ENCODE measurements at regions of chr9 and their contacts with region 1.

Region 1: GRCh38 chr9:35732122-35732799 is at the starts of genes CREB3 and TLN1:
- DNase-seq: peak; percentile 92 to 98 (median 96)
- ATAC-seq: peak; percentile 91
- H3K4me3 ChIP-seq: peak within 1 kb of the TSS; percentile 91 to 99
- H3K4me3 Mint-ChIP-seq: peak within 1 kb of the TSS; percentile 93
- H3K27ac ChIP-seq: peak within 1 kb of the TSS; percentile 84 to 96
- H3K27ac Mint-ChIP-seq: peak within 1 kb of the TSS; percentile 88
- H3K4me1 ChIP-seq: peaks cover 62% of the 10 kb centered on the region
- H3K4me1 Mint-ChIP-seq: peaks cover 24% of the 10 kb centered on the region
- H3K27me3 ChIP-seq: no peaks in the 10 kb centered on the region
- H3K27me3 Mint-ChIP-seq: no peaks in the 10 kb centered on the region
- CTCF ChIP-seq: no peak
- total RNA-seq, gene CREB3: 13.1 to 14.2 TPM
- total RNA-seq, gene TLN1: 128 to 129 TPM

Region 2: DNA sequence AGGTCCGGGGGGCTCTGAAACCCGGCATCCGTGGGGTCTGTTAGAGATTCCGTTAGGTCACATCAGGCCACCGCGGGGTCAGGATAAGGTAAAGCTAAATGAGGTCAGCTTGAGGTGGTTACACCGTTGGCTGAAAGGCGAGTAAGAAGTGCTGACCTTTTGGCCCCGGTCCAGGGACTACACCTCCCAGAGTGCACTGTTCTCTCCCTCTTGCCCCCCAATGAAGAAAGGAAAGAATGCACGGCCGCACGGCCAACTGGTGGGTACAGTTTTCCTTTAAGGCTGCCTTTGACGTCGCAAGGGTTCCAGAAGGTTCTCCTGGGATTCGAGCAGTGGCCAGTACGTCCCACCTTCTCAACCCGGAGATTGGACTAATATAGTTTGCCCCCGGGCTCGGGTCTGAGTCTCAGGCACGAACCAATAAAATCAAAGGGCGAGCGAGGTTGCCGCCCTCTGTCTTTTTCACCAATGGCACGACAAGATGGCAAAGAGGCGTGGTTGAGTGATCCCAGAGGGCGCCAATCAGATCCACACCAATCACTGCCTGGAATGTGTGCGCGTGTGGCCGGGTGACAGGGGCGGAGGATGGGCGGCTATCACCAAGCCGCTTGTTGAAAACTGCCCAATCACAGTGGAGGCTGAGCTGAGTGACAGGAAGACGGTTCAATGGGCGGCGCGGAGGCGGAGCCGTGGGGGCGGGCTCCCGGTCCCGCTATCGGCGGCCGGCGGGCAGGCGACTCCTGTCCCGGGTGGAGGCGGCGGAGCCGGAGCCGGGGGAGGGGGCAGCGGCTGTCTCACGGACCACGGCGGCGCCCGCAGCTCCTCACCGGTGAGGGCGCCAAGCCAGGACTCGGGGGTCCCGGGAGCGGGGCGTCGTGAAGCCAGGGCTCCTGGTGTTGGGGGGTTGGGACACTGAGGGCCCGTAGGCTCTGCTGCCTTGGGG is 743.0 kb before region 1 on chr9 and contains the start of gene DNAJB5:
- CTCF ChIA-PET with region 1: no interaction called
- POLR2A ChIA-PET with region 1: no interaction called
- intact Hi-C with region 1: loop called (anchors 5 kb)
- DNase-seq: peak; percentile 94 to 99 (median 96)
- ATAC-seq: peak; percentile 89
- H3K4me3 ChIP-seq: peak within 1 kb of the TSS; percentile 88 to 95
- H3K4me3 Mint-ChIP-seq: peak within 1 kb of the TSS; percentile 93
- H3K27ac ChIP-seq: peak within 1 kb of the TSS; percentile 42 to 77
- H3K27ac Mint-ChIP-seq: peak within 1 kb of the TSS; percentile 76
- H3K4me1 ChIP-seq: peaks cover 42% of the 10 kb centered on the region
- H3K4me1 Mint-ChIP-seq: peaks cover 46% of the 10 kb centered on the region
- H3K27me3 ChIP-seq: no peaks in the 10 kb centered on the region
- H3K27me3 Mint-ChIP-seq: no peaks in the 10 kb centered on the region
- CTCF ChIP-seq: no peak
- total RNA-seq, gene DNAJB5: 2.1 to 2.2 TPM

Region 3: DNA sequence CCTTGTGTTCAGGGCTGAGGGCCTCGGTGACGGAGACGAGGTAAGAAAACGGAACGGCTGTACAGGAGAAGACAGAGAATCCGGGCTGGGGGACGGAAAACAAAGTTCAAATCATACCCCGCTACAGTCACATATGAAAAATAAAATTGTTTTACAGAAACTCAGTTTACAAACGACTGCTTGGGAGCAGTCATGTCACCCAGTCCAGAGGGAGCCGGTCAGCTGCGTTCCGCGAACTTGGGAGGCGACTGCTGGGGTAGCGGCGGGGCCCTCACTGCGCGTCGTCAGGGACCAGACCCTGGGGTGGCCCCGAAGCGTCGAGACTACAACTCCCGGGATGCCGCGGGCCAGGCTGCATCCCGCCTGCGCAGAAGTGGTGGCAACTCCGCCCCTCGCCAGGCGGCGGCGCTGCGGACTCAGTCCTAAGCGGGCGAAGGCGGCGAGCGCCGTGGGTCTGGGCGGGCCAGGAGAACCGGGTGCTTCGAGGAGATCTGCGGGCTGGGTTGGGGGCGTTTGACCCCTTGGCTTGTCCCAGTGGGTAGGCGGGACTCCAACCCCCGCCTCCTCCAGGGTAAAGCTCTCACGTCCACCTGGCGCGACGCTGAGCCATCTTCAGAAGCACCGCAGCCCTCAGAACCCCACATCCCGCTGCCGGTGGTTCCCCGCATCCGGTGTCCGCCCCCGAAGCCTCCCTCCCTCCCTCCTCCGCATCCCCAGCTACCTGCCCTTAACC is 85.6 kb before region 1 on chr9:
- CTCF ChIA-PET with region 1: interaction called, 14 read pairs
- POLR2A ChIA-PET with region 1: interaction called, 29 read pairs
- intact Hi-C with region 1: loop called (anchors 1 kb)
- DNase-seq: peak; percentile 85 to 95 (median 90)
- ATAC-seq: peak; percentile 86
- H3K4me3 ChIP-seq: peak overlapping the region; percentile 71 to 82
- H3K4me3 Mint-ChIP-seq: peak overlapping the region; percentile 93
- H3K27ac ChIP-seq: peak overlapping the region; percentile 67 to 89
- H3K27ac Mint-ChIP-seq: peak overlapping the region; percentile 95
- H3K4me1 ChIP-seq: peaks cover 55% of the 10 kb centered on the region
- H3K4me1 Mint-ChIP-seq: peaks cover 61% of the 10 kb centered on the region
- H3K27me3 ChIP-seq: no peaks in the 10 kb centered on the region
- H3K27me3 Mint-ChIP-seq: no peaks in the 10 kb centered on the region
- CTCF ChIP-seq: peak; percentile 77

Region 4: DNA sequence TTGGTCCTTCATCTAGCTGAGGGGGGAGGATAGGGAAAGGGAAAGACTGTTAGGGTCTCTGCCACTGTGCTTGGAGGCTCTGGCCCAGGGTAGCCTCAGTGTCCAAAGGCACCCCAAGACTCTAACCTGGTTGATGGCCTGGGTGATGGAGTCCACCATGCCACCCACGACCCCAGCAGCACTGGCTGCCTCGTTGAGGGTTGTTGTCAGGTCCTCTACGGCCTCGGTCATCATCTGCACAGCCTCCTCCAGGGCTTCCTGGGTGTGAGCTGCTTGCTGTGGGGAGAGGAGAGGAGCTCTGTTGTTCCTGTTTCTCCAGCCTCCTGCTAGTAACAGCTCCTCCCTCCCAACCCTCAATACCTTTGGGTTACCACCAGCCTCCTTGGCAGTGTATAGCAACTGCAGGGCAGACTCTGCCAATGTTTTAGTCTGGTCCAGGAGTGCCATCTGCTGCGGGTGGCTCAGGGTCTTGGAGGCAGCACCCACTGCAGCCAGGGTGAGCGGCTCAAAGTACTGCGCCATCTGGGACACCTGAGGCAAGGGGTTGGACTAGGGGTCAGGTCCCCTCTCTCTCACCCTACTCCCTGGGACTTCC is 26.3 kb before region 1 on chr9:
- CTCF ChIA-PET with region 1: interaction called, 12 read pairs
- POLR2A ChIA-PET with region 1: no interaction called
- intact Hi-C with region 1: no loop called
- DNase-seq: no peak
- ATAC-seq: no peak
- H3K4me3 ChIP-seq: no peak overlapping the region
- H3K4me3 Mint-ChIP-seq: no peak overlapping the region
- H3K27ac ChIP-seq: no peak overlapping the region
- H3K27ac Mint-ChIP-seq: no peak overlapping the region
- H3K4me1 ChIP-seq: no peaks in the 10 kb centered on the region
- H3K4me1 Mint-ChIP-seq: no peaks in the 10 kb centered on the region
- H3K27me3 ChIP-seq: no peaks in the 10 kb centered on the region
- H3K27me3 Mint-ChIP-seq: no peaks in the 10 kb centered on the region
- CTCF ChIP-seq: no peak

Region 5: DNA sequence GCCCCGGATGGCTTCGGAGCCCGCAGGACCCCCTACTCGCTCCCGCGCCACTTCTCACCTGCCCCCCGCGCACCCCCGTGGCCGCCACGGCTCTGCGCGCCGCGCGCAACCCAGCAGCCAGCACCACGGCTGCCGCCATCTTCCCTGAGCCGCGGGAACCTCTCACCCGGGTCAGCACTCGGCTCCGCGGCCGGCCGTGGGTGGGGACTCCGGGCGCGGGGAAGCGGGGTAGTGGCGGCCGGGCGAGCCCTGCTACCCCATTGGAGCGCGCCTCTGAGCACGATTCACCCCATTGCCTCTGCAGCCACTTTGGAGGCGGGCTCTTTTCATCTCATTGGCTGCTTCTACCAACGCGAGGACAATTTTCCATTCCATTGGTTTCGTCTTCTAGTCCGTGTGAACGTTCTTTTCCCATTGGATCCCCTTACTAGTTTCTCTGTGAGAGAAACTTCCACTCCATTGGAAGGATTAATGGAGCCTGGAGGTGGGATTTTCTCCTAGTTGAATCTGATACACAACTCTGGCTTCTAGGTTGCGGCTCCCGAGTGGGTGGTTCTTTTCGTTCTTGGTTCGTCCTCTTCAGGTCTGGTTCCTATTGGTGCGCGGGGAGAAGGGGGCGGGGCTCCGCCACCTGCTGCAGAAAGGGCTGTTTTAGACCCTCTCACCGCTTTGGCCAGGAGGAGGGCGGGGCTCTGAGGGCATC is 82.7 kb after region 1 on chr9 and contains the start of gene HINT2:
- CTCF ChIA-PET with region 1: interaction called, 8 read pairs
- POLR2A ChIA-PET with region 1: interaction called, 3 read pairs
- intact Hi-C with region 1: loop called (anchors 1 kb)
- DNase-seq: peak; percentile 95 to 99 (median 97)
- ATAC-seq: peak; percentile 79
- H3K4me3 ChIP-seq: peak within 1 kb of the TSS; percentile 76 to 96
- H3K4me3 Mint-ChIP-seq: peak within 1 kb of the TSS; percentile 97
- H3K27ac ChIP-seq: peak within 1 kb of the TSS; percentile 74 to 86
- H3K27ac Mint-ChIP-seq: peak within 1 kb of the TSS; percentile 87
- H3K4me1 ChIP-seq: peaks cover 31% of the 10 kb centered on the region
- H3K4me1 Mint-ChIP-seq: peaks cover 36% of the 10 kb centered on the region
- H3K27me3 ChIP-seq: no peaks in the 10 kb centered on the region
- H3K27me3 Mint-ChIP-seq: no peaks in the 10 kb centered on the region
- CTCF ChIP-seq: no peak
- total RNA-seq, gene HINT2: 10.0 to 13.6 TPM

Region 6: GRCh38 chr9:36080519-36080918 is 348.3 kb after region 1 on chr9:
- CTCF ChIA-PET with region 1: no interaction called
- POLR2A ChIA-PET with region 1: no interaction called
- intact Hi-C with region 1: no loop called
- DNase-seq: no peak
- ATAC-seq: no peak
- H3K4me3 ChIP-seq: no peak overlapping the region
- H3K4me3 Mint-ChIP-seq: no peak overlapping the region
- H3K27ac ChIP-seq: no peak overlapping the region
- H3K27ac Mint-ChIP-seq: no peak overlapping the region
- H3K4me1 ChIP-seq: no peaks in the 10 kb centered on the region
- H3K4me1 Mint-ChIP-seq: no peaks in the 10 kb centered on the region
- H3K27me3 ChIP-seq: no peaks in the 10 kb centered on the region
- H3K27me3 Mint-ChIP-seq: no peaks in the 10 kb centered on the region
- CTCF ChIP-seq: no peak

Region 7: DNA sequence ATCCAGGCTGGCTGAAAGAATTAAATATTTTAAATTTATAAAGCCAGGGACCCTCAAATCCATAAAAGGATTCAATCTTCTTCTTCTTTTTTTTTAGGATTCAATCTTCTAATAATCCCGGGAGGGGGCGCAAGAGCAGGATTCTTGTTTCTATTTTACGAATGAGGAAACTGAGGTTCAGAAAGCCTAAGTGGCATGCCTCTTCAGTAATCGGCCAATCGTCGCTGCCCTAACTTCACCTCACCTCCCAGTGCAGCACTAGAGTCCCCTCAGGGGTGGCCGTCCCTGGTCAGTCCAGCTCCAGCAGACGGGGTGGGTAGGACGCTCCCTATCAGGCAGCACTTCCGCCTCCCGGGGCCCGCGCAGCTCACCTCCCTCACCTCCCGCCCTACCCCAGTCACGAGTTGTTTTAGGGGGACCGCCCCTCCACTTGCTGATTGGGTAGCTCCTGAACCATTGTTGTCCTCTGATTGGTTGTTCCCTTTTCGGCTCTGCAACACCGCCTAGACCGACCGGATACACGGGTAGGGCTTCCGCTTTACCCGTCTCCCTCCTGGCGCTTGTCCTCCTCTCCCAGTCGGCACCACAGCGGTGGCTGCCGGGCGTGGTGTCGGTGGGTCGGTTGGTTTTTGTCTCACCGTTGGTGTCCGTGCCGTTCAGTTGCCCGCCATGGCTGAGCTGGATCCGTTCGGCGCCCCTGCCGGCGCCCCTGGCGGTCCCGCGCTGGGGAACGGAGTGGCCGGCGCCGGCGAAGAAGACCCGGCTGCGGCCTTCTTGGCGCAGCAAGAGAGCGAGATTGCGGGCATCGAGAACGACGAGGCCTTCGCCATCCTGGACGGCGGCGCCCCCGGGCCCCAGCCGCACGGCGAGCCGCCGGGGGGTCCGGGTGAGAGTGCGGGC is 458.4 kb after region 1 on chr9 and contains the start of gene CLTA:
- CTCF ChIA-PET with region 1: no interaction called
- POLR2A ChIA-PET with region 1: no interaction called
- intact Hi-C with region 1: loop called in 1 of 2 experiments (anchors 1 kb)
- DNase-seq: peak; percentile 84 to 99 (median 93)
- ATAC-seq: peak; percentile 97
- H3K4me3 ChIP-seq: peak within 1 kb of the TSS; percentile 63 to 95
- H3K4me3 Mint-ChIP-seq: peak within 1 kb of the TSS; percentile 94
- H3K27ac ChIP-seq: peak within 1 kb of the TSS; percentile 74 to 80
- H3K27ac Mint-ChIP-seq: peak within 1 kb of the TSS; percentile 91
- H3K4me1 ChIP-seq: peaks cover 37% of the 10 kb centered on the region
- H3K4me1 Mint-ChIP-seq: peaks cover 50% of the 10 kb centered on the region
- H3K27me3 ChIP-seq: no peaks in the 10 kb centered on the region
- H3K27me3 Mint-ChIP-seq: no peaks in the 10 kb centered on the region
- CTCF ChIP-seq: peak; percentile 55
- total RNA-seq, gene CLTA: 39.1 to 39.6 TPM

Measured in CD8-positive, alpha-beta T cell (primary cell).